Posterior vena cava (tissue), 2 donors: ENCODE measurements at regions of chr9 and their contacts with region 1.

Region 1: GRCh38 chr9:119596703-119597102 is 227.5 kb upstream of the BRINP1 start:
- DNase-seq: no peak

Region 2: DNA sequence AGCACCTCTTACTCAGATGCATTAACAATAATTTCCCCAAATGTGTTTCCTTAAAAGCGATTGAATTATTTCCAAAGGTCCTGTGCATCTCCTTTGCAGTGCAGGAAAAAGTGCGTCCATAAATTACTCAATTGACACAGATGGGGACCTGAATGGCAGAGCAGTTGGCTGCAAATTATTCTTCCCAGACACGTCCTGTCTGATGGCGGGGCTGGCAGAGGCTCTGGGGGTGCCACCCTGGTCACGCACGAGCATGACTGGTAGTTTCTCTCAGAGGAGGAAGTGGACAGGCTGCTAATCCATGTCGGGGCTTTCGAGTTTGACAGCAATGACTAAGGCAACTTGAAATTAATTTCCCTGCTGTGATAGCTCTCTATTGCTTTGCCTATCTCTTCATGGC is 37.3 kb after region 1 on chr9:
- intact Hi-C with region 1: loop called in 1 of 2 experiments (anchors 1 kb)
- DNase-seq: no peak

Region 3: GRCh38 chr9:120514405-120514804 is 917.7 kb after region 1 on chr9:
- intact Hi-C with region 1: no loop called
- DNase-seq: no peak